ENCODE measurements at regions of chr1 and their contacts with region 1.

Region 1: DNA sequence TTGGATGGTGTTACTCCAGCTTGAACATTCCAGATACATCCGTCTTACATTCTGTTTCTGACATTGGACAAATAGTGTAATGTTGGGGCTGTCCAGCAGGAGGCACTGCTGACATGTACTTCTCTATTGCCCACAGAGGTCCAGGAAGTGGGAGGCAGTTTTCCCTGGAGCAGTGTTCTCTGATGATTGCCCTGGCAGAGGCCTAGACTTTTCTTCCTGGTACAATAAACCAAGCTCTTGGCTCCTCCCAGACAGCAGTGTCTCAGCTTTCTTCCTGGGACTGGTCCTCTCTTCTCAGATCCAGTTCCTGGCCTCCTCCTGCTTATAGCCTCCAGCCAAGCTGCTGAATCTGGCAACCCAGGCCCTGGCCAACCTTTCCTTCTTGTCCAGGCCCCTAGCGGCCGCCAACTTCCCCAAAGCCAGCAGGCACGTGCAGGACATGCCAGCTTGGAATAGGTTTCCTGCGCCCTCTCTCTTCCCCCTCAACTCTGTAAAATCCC is 14.9 kb upstream of the IFNLR1 start:
- DNase-seq: peak; percentile 73
- ATAC-seq: peak; percentile 87
- H3K4me3 ChIP-seq: no peak overlapping the region
- H3K27ac ChIP-seq: no peak overlapping the region
- H3K4me1 ChIP-seq: peaks cover 8% of the 10 kb centered on the region
- H3K27me3 ChIP-seq: no peaks in the 10 kb centered on the region
- CTCF ChIP-seq: peak; percentile 82

Region 2: DNA sequence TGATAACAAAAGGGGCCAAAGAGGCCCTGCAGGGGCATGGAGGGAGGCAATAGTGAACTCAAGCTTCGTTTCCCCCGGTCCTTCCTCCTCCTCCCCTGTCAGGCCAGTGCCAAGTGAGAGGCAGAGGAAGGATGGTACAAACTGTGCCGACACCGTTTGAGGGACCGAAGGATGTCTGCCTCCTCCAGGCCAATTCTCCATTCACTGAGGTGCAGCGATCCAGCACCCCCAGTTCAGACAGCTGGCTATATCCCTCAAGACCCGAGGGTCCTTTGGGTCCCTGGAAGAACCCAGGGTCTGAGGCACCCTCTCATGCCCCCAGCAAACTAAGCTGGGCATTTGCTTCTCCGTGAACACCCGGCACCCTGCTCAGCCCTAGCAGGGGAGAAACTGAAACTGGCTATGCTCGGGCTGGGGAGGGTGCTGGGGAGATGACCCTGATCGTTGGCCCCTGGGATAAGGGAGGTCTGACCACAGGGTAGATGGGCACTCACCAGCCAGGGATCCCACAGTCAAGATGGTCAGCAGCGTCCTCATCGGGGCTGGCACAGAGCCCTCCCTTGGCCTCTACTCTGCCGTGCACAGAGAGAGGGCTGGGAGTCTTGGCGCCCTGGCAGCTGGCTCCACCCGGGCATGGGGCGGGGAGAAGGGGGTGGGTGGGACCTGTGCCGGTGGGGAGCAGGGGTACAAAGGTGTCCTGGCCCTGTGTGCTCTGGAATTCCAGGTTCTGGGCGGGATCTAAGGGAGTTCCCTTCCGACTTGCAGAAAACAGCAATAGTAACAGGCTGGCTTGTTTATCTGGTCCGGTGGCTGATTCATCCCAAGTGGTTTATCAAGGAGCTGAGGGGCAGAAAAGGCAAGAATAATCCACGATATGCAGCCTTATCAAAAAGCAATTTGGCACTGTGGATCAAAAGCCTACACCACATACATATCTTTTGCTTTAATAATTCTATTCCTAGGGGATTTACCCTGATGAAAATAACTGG is 59.2 kb before region 1 on chr1 and contains the start of gene IL22RA1:
- intact Hi-C with region 1: no loop called
- DNase-seq: no peak
- ATAC-seq: peak; percentile 67
- H3K4me3 ChIP-seq: peak within 1 kb of the TSS; percentile 42
- H3K27ac ChIP-seq: no peak within 1 kb of the TSS
- H3K4me1 ChIP-seq: no peaks in the 10 kb centered on the region
- H3K27me3 ChIP-seq: no peaks in the 10 kb centered on the region
- CTCF ChIP-seq: no peak
- total RNA-seq, gene IL22RA1: 0.87 TPM

Region 3: DNA sequence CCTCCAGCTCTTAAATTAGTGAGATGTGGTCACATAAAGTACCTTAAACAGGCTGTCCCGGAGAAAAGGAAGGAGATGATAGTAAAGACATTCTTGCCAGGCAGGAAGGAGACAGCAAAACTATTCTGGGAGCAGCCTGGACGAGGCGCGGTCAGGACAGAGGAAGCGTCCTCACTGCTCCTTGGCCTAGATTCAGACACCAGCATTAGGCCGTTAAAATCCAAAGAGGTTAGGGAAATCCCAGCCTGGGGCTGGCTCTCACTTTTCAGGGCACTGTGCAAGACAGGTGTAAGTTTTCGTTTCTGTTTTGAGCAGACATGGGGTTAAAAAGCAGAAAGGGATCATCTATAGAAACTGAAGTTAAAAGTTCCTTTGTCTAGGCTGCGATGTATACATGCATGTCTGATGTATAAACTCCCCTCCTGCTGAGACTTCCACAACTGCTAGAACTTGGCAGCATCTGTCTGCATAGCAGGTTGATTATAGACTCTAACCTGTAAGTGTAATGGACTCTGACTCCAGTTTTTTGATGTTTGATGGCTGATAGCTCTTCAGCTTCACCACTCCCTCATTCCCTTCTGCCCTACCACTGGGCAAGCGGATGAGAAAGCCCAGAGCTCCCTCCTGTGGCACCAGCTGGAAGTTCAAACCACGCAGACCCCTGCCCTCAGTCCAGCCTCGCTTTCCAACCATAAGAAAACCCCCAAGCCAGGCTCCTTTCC is 190.1 kb after region 1 on chr1:
- intact Hi-C with region 1: loop called (anchors 2 kb)
- DNase-seq: peak; percentile 76
- ATAC-seq: peak; percentile 91
- H3K4me3 ChIP-seq: peak overlapping the region; percentile 24
- H3K27ac ChIP-seq: peak overlapping the region; percentile 79
- H3K4me1 ChIP-seq: peaks cover 14% of the 10 kb centered on the region
- H3K27me3 ChIP-seq: no peaks in the 10 kb centered on the region
- CTCF ChIP-seq: peak; percentile 76

Region 4: DNA sequence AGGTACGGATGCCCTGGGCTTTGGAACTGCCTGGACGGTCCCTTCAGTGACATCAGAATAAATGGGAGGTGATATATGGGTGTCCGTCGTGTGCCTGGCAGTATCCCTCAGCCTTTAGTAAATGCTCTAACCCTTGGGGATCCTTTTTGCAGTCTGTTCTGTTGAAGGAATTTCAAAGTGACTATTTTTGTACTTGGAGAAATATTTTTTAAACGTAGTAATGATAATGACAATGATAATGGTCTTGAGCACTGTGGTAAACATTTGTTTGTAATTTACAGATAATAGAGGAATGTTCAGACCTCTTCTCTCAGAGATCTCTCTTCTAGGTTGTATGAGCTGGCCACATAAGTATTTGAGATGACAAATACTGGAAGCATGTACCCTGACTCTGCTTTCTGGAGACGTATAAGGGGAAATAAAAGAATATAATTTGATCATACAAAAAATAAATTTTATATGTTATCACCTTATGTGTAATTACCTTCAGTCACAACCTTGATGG is 399.1 kb after region 1 on chr1:
- intact Hi-C with region 1: no loop called
- DNase-seq: no peak
- ATAC-seq: no peak
- H3K4me3 ChIP-seq: no peak overlapping the region
- H3K27ac ChIP-seq: no peak overlapping the region
- H3K4me1 ChIP-seq: no peaks in the 10 kb centered on the region
- H3K27me3 ChIP-seq: peaks cover 6% of the 10 kb centered on the region
- CTCF ChIP-seq: no peak

Measured in upper lobe of right lung (tissue), 1 donor.